ENCODE measurements at regions of chr10 and their contacts with region 1.

Region 1: GRCh38 chr10:69087590-69088470 is at the start of gene SRGN:
- DNase-seq: peak; percentile 87 to 94 (median 90)
- H3K4me3 ChIP-seq: peak within 1 kb of the TSS; percentile 76 to 89
- H3K4me3 Mint-ChIP-seq: peak within 1 kb of the TSS; percentile 86 to 96 (median 92)
- H3K27ac ChIP-seq: peak within 1 kb of the TSS; percentile 100
- H3K27ac Mint-ChIP-seq: peak within 1 kb of the TSS; percentile 94 to 99 (median 98)
- H3K4me1 ChIP-seq: peaks cover 49% of the 10 kb centered on the region
- H3K4me1 Mint-ChIP-seq: peaks cover 38 to 67% (median 50%) of the 10 kb centered on the region in 4 donors
- H3K27me3 ChIP-seq: no peaks in the 10 kb centered on the region
- H3K27me3 Mint-ChIP-seq: peaks cover 0 to 1% of the 10 kb centered on the region in 2 donors
- total RNA-seq, gene SRGN: 122 to 133 TPM

Region 2: GRCh38 chr10:68720793-68721672 is 366.8 kb before region 1 on chr10 and contains the start of gene CCAR1:
- CTCF ChIA-PET with region 1: no interaction called
- POLR2A ChIA-PET with region 1: no interaction called
- intact Hi-C with region 1: loop called (anchors 5 kb)
- DNase-seq: peak; percentile 95 to 97 (median 97)
- H3K4me3 ChIP-seq: peak within 1 kb of the TSS; percentile 26 to 84
- H3K4me3 Mint-ChIP-seq: peak within 1 kb of the TSS; percentile 94 to 99 (median 98)
- H3K27ac ChIP-seq: peak within 1 kb of the TSS; percentile 94
- H3K27ac Mint-ChIP-seq: peak within 1 kb of the TSS; percentile 98 to 100 (median 99)
- H3K4me1 ChIP-seq: peaks cover 10% of the 10 kb centered on the region
- H3K4me1 Mint-ChIP-seq: peaks cover 13 to 23% (median 16%) of the 10 kb centered on the region in 4 donors
- H3K27me3 ChIP-seq: no peaks in the 10 kb centered on the region
- H3K27me3 Mint-ChIP-seq: no peaks in the 10 kb centered on the region
- total RNA-seq, gene CCAR1: 96.3 to 97.3 TPM

Region 3: GRCh38 chr10:68988530-68989316 is 99.1 kb before region 1 on chr10 and contains the start of gene KIFBP:
- CTCF ChIA-PET with region 1: interaction called, 27 read pairs
- POLR2A ChIA-PET with region 1: interaction called, 16 read pairs
- intact Hi-C with region 1: loop called (anchors 1 kb)
- DNase-seq: peak; percentile 82 to 90 (median 84)
- H3K4me3 ChIP-seq: peak within 1 kb of the TSS; percentile 79 to 99
- H3K4me3 Mint-ChIP-seq: peak within 1 kb of the TSS; percentile 92 to 100 (median 99)
- H3K27ac ChIP-seq: peak within 1 kb of the TSS; percentile 71
- H3K27ac Mint-ChIP-seq: peak within 1 kb of the TSS; percentile 86 to 99 (median 98)
- H3K4me1 ChIP-seq: peaks cover 49% of the 10 kb centered on the region
- H3K4me1 Mint-ChIP-seq: peaks cover 36 to 63% (median 53%) of the 10 kb centered on the region in 4 donors
- H3K27me3 ChIP-seq: no peaks in the 10 kb centered on the region
- H3K27me3 Mint-ChIP-seq: no peaks in the 10 kb centered on the region
- total RNA-seq, gene KIFBP: 17.9 to 18.5 TPM

Region 4: DNA sequence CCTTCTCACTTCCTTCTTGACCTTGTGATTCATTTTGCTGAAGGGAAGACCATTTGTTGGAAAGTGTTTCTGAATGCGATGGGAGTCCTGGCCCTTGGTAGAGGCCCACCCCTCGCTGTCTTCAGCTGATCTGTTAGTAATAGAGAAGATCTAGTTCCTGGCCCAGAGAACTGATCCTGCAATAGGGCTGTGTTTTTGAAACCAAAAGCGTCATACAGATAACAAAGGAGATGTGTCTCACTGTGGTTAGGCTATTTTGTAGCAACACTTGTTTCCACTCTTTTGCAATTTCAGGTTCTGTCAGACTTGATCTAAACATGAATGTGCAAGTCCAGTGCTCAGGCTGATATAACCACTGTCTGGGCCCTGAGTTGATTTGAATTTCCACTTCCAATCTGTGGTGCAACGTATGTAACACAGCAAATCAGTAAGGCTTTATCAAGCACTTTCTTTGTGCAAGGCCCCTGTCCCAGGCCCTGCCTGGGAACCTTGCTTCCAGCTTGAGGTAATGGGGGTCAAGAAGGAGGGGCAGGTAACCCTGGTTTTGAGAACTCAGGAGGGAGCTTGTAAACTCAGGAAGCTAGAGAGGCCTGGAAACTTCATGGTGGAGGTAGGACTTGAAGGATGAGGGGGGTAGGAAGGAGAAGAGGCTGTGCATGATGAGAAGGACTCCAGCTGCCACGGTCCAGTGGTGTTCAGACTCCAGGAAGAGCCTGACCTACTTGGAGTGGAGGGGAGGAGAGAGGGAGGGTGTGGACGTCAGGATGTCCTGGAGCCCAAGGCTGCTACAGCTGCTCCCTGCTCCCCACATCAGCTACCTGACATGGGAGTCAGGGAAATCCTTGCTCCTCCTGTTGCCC is 42.2 kb before region 1 on chr10:
- CTCF ChIA-PET with region 1: interaction called, 27 read pairs
- POLR2A ChIA-PET with region 1: interaction called, 110 read pairs
- intact Hi-C with region 1: loop called (anchors 1 kb)
- DNase-seq: peak; percentile 54 to 70 (median 63)
- H3K4me3 ChIP-seq: no peak overlapping the region
- H3K4me3 Mint-ChIP-seq: peak overlapping the region in 7 of 8 donors; percentile 73 to 89 (median 77)
- H3K27ac ChIP-seq: peak overlapping the region; percentile 45
- H3K27ac Mint-ChIP-seq: peak overlapping the region; percentile 93 to 99 (median 97)
- H3K4me1 ChIP-seq: peaks cover 32% of the 10 kb centered on the region
- H3K4me1 Mint-ChIP-seq: peaks cover 19 to 32% (median 27%) of the 10 kb centered on the region in 4 donors
- H3K27me3 ChIP-seq: no peaks in the 10 kb centered on the region
- H3K27me3 Mint-ChIP-seq: no peaks in the 10 kb centered on the region

Region 5: DNA sequence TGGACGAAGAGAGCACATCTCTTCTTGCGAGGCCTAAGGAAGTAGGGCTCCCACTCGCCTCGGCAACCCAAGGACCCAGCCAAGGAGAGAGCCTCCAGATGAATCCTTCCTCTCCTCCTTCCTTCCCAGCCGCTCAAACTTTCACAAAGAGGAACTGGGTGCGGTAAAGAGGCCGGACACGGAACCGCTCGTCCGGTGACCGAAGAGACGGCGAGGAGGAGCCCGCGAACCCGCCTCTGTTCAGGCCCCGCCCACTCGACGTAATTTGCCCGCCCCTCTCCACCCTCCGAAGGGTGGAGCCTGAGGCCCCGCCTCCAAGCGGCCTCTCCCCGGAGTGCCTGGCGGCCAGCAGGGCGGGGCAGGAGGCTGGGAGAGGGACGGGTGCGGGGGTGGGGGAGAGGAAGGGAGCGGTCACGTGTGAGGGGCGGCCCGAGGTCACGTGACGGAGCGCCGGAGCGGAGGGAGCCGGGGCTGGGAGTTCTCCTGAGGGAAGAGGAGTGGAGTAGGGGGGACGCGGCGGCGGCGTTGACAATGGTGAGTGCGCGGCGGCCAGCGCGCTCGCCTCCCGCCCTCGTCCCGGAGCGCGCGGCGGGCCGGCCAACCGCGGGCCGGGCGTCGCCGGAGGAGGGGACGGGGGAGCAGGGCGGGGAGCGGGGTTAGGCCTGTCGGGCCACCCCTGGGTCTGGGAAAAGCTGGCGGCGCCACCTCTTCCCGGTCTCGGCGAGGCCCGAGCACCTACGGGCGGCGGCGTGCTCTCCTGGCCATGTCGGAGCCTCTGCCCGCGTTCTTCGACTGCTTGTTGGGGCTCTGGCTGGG is 36.1 kb after region 1 on chr10 and contains the start of gene VPS26A:
- CTCF ChIA-PET with region 1: interaction called, 6 read pairs
- POLR2A ChIA-PET with region 1: interaction called, 10 read pairs
- intact Hi-C with region 1: loop called (anchors 1 kb)
- DNase-seq: peak; percentile 98 to 100 (median 98)
- H3K4me3 ChIP-seq: peak within 1 kb of the TSS; percentile 47 to 81
- H3K4me3 Mint-ChIP-seq: peak within 1 kb of the TSS; percentile 92 to 96 (median 94)
- H3K27ac ChIP-seq: peak within 1 kb of the TSS; percentile 96
- H3K27ac Mint-ChIP-seq: peak within 1 kb of the TSS; percentile 96 to 99 (median 98)
- H3K4me1 ChIP-seq: peaks cover 37% of the 10 kb centered on the region
- H3K4me1 Mint-ChIP-seq: peaks cover 13 to 29% (median 21%) of the 10 kb centered on the region in 4 donors
- H3K27me3 ChIP-seq: no peaks in the 10 kb centered on the region
- H3K27me3 Mint-ChIP-seq: no peaks in the 10 kb centered on the region
- total RNA-seq, gene VPS26A: 31.7 to 35.9 TPM

Region 6: GRCh38 chr10:69312533-69312932 is 224.7 kb after region 1 on chr10:
- CTCF ChIA-PET with region 1: no interaction called
- POLR2A ChIA-PET with region 1: no interaction called
- intact Hi-C with region 1: no loop called
- DNase-seq: no peak
- H3K4me3 ChIP-seq: no peak overlapping the region
- H3K4me3 Mint-ChIP-seq: no peak overlapping the region
- H3K27ac ChIP-seq: no peak overlapping the region
- H3K27ac Mint-ChIP-seq: no peak overlapping the region
- H3K4me1 ChIP-seq: peaks cover 5% of the 10 kb centered on the region
- H3K4me1 Mint-ChIP-seq: peaks cover 3 to 6% (median 5%) of the 10 kb centered on the region in 4 donors
- H3K27me3 ChIP-seq: no peaks in the 10 kb centered on the region
- H3K27me3 Mint-ChIP-seq: no peaks in the 10 kb centered on the region

Measured in CD4-positive, alpha-beta memory T cell (primary cell).